Naive thymus-derived CD4-positive, alpha-beta T cell (primary cell): ENCODE measurements at regions of chr11 and their contacts with region 1.

Region 1: DNA sequence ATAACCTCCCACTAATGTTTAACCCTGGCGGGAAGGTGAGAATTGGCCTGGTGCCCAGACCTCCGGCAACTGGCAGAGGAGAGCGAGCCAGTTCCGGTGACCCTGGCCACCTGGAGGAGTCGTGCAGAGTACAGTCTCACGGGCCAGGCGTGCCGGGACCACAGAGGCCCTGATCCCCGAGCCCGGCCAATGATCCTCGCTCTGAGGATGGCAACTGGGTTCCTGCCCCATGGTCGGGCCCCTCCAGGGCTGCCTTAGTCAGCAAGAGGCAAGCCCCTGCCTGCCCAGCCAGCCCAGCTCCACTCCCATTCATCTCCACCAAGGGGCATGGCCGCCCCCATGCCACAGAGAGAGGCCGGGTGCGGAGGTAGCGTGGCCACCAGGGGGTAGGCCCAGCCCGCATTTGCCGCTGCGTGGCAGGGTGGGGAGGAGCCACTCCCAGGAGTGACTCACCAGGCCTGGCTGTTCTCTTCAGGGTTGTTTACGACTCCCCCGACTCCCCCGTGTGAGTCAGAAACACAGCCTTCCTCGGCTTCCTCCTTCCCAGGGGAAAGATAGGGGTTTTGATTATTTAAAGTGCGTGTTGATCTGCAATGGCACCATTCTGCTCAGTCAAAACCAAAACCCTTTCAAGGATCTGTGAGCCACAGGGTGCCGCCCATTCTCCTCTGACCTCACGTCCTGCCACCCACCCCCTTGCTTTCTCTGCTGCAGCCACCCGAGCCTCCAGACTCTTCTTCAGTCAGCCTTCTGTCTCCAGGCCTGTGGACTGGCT is at the start of gene SLC25A45:
- DNase-seq: peak; percentile 82 to 95 (median 91)
- ATAC-seq: peak; percentile 91
- H3K4me3 ChIP-seq: peak within 1 kb of the TSS; percentile 76
- H3K4me3 Mint-ChIP-seq: peak within 1 kb of the TSS; percentile 82 to 98 (median 93)
- H3K27ac ChIP-seq: peak within 1 kb of the TSS; percentile 82
- H3K27ac Mint-ChIP-seq: peak within 1 kb of the TSS; percentile 97 to 100 (median 99)
- H3K4me1 ChIP-seq: peaks cover 42 to 45% of the 10 kb centered on the region in 2 donors
- H3K4me1 Mint-ChIP-seq: peaks cover 31 to 56% (median 46%) of the 10 kb centered on the region in 7 donors
- H3K27me3 ChIP-seq: no peaks in the 10 kb centered on the region
- H3K27me3 Mint-ChIP-seq: no peaks in the 10 kb centered on the region
- total RNA-seq, gene SLC25A45: 20.2 to 90.6 (median 34.1) TPM

Region 2: GRCh38 chr11:65366340-65366773 is 15.9 kb before region 1 on chr11:
- CTCF ChIA-PET with region 1: interaction called, 4 read pairs
- POLR2A ChIA-PET with region 1: interaction called, 5 read pairs
- intact Hi-C with region 1: loop called in 1 of 2 experiments (anchors 1 kb)
- DNase-seq: peak in 7 of 9 donors; percentile 47 to 71 (median 59)
- ATAC-seq: peak; percentile 82
- H3K4me3 ChIP-seq: no peak overlapping the region
- H3K4me3 Mint-ChIP-seq: no peak overlapping the region
- H3K27ac ChIP-seq: no peak overlapping the region
- H3K27ac Mint-ChIP-seq: no peak overlapping the region
- H3K4me1 ChIP-seq: no peaks in the 10 kb centered on the region
- H3K4me1 Mint-ChIP-seq: peaks cover 0 to 9% (median 0%) of the 10 kb centered on the region in 7 donors
- H3K27me3 ChIP-seq: no peaks in the 10 kb centered on the region
- H3K27me3 Mint-ChIP-seq: no peaks in the 10 kb centered on the region

Region 3: GRCh38 chr11:65425105-65425970 is 43.1 kb after region 1 on chr11:
- CTCF ChIA-PET with region 1: interaction called, 3 read pairs
- POLR2A ChIA-PET with region 1: interaction called, 278 read pairs
- intact Hi-C with region 1: loop called in 1 of 2 experiments (anchors 1 kb)
- DNase-seq: peak in 8 of 9 donors; percentile 75 to 98 (median 94)
- ATAC-seq: peak; percentile 56
- H3K4me3 ChIP-seq: peak overlapping the region; percentile 74
- H3K4me3 Mint-ChIP-seq: peak overlapping the region; percentile 92 to 100 (median 97)
- H3K27ac ChIP-seq: peak overlapping the region; percentile 98
- H3K27ac Mint-ChIP-seq: peak overlapping the region; percentile 97 to 100 (median 99)
- H3K4me1 ChIP-seq: peaks cover 45 to 46% of the 10 kb centered on the region in 2 donors
- H3K4me1 Mint-ChIP-seq: peaks cover 42 to 79% (median 50%) of the 10 kb centered on the region in 7 donors
- H3K27me3 ChIP-seq: no peaks in the 10 kb centered on the region
- H3K27me3 Mint-ChIP-seq: peaks cover 0 to 32% (median 0%) of the 10 kb centered on the region in 5 donors

Region 4: GRCh38 chr11:65477149-65477965 is 95.1 kb after region 1 on chr11:
- CTCF ChIA-PET with region 1: interaction called, 4 read pairs
- POLR2A ChIA-PET with region 1: interaction called, 25 read pairs
- intact Hi-C with region 1: loop called in 1 of 2 experiments (anchors 1 kb)
- DNase-seq: peak; percentile 69 to 96 (median 75)
- ATAC-seq: peak; percentile 94
- H3K4me3 ChIP-seq: peak overlapping the region; percentile 97
- H3K4me3 Mint-ChIP-seq: peak overlapping the region; percentile 87 to 100 (median 96)
- H3K27ac ChIP-seq: peak overlapping the region; percentile 96
- H3K27ac Mint-ChIP-seq: peak overlapping the region; percentile 94 to 100 (median 99)
- H3K4me1 ChIP-seq: peaks cover 6 to 17% of the 10 kb centered on the region in 2 donors
- H3K4me1 Mint-ChIP-seq: peaks cover 8 to 30% (median 14%) of the 10 kb centered on the region in 7 donors
- H3K27me3 ChIP-seq: no peaks in the 10 kb centered on the region
- H3K27me3 Mint-ChIP-seq: peaks cover 0 to 2% (median 0%) of the 10 kb centered on the region in 5 donors

Region 5: GRCh38 chr11:65540297-65541092 is 158.3 kb after region 1 on chr11:
- CTCF ChIA-PET with region 1: no interaction called
- POLR2A ChIA-PET with region 1: interaction called, 3 read pairs
- intact Hi-C with region 1: loop called in 1 of 2 experiments (anchors 1 kb)
- DNase-seq: peak; percentile 84 to 95 (median 91)
- ATAC-seq: peak; percentile 94
- H3K4me3 ChIP-seq: peak overlapping the region; percentile 71
- H3K4me3 Mint-ChIP-seq: peak overlapping the region; percentile 81 to 90 (median 84)
- H3K27ac ChIP-seq: peak overlapping the region; percentile 74
- H3K27ac Mint-ChIP-seq: peak overlapping the region in 8 of 9 donors; percentile 70 to 92 (median 86)
- H3K4me1 ChIP-seq: peaks cover 12 to 18% of the 10 kb centered on the region in 2 donors
- H3K4me1 Mint-ChIP-seq: peaks cover 13 to 32% (median 22%) of the 10 kb centered on the region in 7 donors
- H3K27me3 ChIP-seq: no peaks in the 10 kb centered on the region
- H3K27me3 Mint-ChIP-seq: no peaks in the 10 kb centered on the region

Region 6: GRCh38 chr11:65565624-65566453 is 183.6 kb after region 1 on chr11:
- CTCF ChIA-PET with region 1: no interaction called
- POLR2A ChIA-PET with region 1: no interaction called
- intact Hi-C with region 1: no loop called
- DNase-seq: peak in 1 of 9 donors; percentile 33
- ATAC-seq: peak; percentile 17
- H3K4me3 ChIP-seq: peak overlapping the region; percentile 49
- H3K4me3 Mint-ChIP-seq: peak overlapping the region; percentile 74 to 99 (median 82)
- H3K27ac ChIP-seq: peak overlapping the region; percentile 96
- H3K27ac Mint-ChIP-seq: peak overlapping the region; percentile 94 to 99 (median 96)
- H3K4me1 ChIP-seq: peaks cover 52 to 55% of the 10 kb centered on the region in 2 donors
- H3K4me1 Mint-ChIP-seq: peaks cover 47 to 75% (median 60%) of the 10 kb centered on the region in 7 donors
- H3K27me3 ChIP-seq: no peaks in the 10 kb centered on the region
- H3K27me3 Mint-ChIP-seq: no peaks in the 10 kb centered on the region